Heart left ventricle (tissue), 16 donors: ENCODE measurements at regions of chr16 and their contacts with region 1.

Region 1: DNA sequence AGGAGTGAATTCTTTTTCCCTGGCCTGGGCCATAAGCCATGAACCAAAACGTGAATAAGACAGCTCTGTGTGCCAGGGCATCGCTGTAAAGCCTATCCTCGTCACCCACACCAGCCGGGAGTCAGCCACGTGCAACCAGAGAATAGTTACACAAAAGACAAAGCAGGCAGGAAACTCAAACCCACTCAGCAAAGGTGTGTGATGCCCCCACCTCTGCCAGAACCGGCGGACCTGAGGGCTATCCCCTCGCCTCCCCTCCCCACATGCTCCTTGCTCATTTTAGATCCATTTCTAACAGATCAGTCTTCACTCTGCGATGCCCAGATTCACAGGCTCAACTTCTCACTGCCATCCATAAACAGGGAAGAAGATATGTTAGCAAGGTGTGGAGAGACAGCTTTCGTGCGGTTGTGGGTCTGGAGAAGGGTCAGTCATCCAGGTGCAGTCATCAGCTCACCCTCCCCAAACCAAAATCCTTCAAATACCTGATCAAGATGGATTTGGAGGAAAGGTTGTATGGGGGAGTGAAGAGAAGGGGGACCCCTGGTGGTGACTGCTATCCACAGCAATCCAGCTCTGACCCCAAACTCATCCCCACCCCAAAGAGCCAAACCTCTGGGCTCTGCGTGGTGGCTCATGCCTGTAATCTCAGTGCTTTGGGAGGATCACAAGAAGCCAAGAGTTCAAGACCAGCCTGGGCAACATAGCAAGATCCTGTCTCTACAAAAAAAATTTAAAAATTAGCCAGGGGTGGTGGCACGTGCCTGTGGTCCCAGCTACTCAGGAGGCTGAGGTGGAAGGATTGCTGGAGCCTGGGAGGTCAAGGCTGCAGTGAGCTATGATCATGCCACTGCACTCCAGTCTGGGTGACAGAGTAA is 219.2 kb downstream of the C16orf78 start:
- DNase-seq: peak in 1 of 5 donors; percentile 28
- ATAC-seq: peak in 3 of 4 donors; percentile 49 to 58 (median 56)
- H3K4me3 ChIP-seq: no peak overlapping the region
- H3K27ac ChIP-seq: no peak overlapping the region
- H3K4me1 ChIP-seq: peaks cover 0 to 28% (median 11%) of the 10 kb centered on the region in 12 donors
- H3K27me3 ChIP-seq: peaks cover 0 to 2% (median 0%) of the 10 kb centered on the region in 9 donors
- CTCF ChIP-seq: peak; percentile 63 to 84 (median 75)
- POLR2A ChIP-seq: no peak

Region 2: DNA sequence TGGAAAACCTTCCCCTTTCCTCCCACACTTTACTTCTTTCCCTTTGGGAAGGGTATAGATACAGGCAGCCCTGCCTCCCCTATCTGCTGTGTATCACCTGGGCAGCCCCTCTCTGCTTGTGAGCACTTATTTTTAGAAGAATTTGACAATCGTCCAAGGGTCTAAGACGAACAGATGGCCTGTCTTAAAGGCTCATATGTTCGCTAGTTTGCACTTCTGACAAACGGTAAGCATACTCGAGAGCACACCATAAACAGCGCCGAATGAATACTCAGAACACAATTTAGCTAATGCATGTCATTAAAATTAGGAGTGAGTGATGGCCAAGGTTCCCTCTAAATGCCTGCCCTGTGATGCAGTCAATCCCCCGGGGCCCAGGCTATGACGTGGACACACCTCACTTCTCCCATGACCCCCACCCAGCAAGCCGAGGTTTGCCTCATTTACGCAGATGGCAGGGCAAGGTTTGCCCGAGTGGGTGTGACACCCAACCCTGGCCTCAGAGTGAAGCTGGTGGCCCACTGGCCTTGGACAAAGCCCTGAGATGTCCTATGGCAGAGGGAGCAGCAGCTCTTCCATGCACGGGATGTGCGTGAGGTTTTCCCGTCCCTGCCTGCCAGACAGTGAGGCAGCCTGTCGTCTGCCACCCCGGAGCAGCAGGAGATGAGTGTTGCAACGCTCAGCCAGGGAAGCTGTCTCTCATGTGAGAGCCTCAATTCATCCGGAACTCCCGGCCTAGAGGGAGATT is 93.9 kb before region 1 on chr16:
- intact Hi-C with region 1: loop called in 7 of 10 experiments (anchors 5 to 10 kb)
- DNase-seq: no peak
- ATAC-seq: no peak
- H3K4me3 ChIP-seq: no peak overlapping the region
- H3K27ac ChIP-seq: no peak overlapping the region
- H3K4me1 ChIP-seq: no peaks in the 10 kb centered on the region
- H3K27me3 ChIP-seq: no peaks in the 10 kb centered on the region
- CTCF ChIP-seq: no peak
- POLR2A ChIP-seq: no peak

Region 3: DNA sequence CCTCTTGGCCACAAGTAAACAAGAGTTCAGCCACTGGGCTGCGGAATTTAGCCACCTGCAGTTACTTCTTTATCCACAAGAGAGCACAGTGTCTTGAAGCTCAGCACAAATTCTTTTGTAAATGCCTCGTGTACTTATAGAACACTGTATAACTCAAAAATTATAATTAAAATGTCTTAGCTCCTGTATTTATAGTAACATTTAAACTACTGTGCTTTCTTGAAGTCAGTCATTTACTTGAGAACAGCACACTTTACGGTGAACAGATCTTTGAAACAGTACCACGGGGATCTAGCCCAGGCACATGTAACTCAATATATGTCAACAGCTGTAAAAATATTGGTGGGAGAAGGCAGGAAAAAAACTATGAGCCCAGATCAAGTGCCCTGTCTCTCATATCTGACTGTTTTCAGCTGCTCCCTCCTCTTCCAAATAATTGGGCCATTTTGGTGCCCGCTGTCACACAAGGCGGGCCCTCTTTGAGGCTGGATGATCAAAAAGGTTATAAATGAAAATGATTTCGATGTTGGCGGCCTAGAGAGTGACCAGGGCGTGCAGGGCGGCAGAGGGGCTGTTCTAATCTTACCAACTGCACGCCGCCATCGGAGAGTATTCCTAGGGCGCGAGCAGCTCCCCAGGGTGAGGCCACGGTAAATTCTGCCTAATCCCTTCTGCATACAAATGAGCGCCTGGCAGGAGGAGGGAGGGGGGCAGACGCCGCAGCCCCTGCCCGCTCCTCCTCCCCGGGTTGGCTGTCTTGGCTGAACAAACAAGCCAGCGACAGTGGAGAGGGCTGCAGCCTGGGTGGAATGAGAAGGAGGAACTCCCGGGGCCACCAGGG is 36.0 kb before region 1 on chr16:
- intact Hi-C with region 1: loop called in 2 of 10 experiments (anchors 5 kb)
- DNase-seq: no peak
- ATAC-seq: no peak
- H3K4me3 ChIP-seq: no peak overlapping the region
- H3K27ac ChIP-seq: no peak overlapping the region
- H3K4me1 ChIP-seq: peaks cover 0 to 27% (median 0%) of the 10 kb centered on the region in 12 donors
- H3K27me3 ChIP-seq: no peaks in the 10 kb centered on the region
- CTCF ChIP-seq: peak; percentile 25 to 57 (median 44)
- POLR2A ChIP-seq: no peak

Region 4: DNA sequence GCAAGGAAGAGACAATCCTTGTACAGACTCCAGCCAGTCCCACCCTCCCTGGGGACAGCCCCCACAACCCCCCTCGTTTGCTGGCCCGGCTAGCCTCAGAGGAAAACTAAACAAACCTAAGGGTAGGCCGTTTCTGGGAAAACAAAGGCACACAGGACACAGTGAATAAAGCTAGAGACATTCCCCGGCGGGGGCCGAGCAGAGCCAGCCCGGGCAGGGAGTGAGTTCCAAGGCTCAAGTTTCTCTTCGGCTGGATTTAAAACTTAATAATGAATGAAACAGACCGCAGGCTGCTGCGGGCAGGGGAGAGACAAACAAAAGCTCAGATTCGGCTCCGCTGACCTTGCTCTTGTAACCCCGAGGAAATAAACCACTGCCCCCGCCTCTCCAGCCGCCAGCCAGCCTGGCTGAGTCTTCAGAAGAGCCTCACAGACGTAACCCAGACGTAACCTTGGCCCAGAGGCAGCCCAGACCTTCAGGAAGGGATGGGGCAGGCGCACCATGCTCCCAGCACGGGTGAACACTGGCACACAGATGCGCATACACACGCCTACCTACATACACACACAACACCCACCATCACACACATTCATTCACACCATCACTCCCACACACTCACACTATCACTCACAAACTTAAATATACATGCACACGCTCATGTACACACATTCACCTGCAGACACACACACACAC is 47.1 kb after region 1 on chr16:
- intact Hi-C with region 1: no loop called
- DNase-seq: peak; percentile 63 to 85 (median 73)
- ATAC-seq: peak; percentile 43 to 82 (median 65)
- H3K4me3 ChIP-seq: peak overlapping the region in 1 of 12 donors; percentile 26
- H3K27ac ChIP-seq: peak overlapping the region in 11 of 12 donors; percentile 10 to 69 (median 63)
- H3K4me1 ChIP-seq: peaks cover 2 to 48% (median 32%) of the 10 kb centered on the region in 12 donors
- H3K27me3 ChIP-seq: no peaks in the 10 kb centered on the region
- CTCF ChIP-seq: no peak
- POLR2A ChIP-seq: no peak

Region 5: DNA sequence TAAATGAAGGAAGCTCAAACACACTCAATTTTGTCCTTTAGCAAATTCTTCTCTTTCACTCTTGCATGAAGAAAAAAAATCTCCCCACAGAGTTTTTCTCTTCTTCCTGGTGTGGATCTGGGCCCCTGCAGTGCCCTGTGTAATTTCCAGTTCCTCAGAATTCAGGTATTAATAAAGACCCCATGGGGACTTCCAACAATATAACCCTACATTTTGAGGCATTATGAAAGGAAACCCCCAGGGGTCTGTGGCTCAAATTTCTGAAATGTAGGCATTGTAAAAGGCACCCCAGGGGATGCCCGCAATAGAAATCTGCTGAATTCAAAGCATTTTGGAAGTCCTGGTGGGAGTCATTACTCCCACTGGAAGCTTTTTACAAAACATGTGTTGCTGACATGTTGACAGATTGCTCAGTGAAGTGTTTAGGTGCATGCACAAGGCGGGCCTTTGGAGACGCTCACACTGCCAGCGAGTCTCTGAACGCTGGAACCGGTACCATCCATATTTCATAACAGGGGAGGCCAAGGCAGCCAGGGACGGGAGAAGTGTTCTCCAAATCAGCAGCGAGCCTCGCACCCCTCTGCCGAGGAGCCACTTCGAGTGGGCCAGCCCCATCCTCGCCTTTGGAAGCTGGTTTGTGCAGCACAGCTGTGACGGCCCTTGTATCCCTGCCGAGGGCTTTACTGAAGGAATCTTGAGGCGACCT is 109.2 kb after region 1 on chr16:
- intact Hi-C with region 1: loop called in 1 of 10 experiments (anchors 5 kb)
- DNase-seq: peak; percentile 39 to 87 (median 79)
- ATAC-seq: peak; percentile 50 to 79 (median 68)
- H3K4me3 ChIP-seq: peak overlapping the region in 1 of 12 donors; percentile 22
- H3K27ac ChIP-seq: peak overlapping the region in 6 of 12 donors; percentile 3 to 57 (median 18)
- H3K4me1 ChIP-seq: peaks cover 0 to 55% (median 33%) of the 10 kb centered on the region in 12 donors
- H3K27me3 ChIP-seq: peaks cover 0 to 3% (median 0%) of the 10 kb centered on the region in 9 donors
- CTCF ChIP-seq: no peak
- POLR2A ChIP-seq: no peak

Region 6: DNA sequence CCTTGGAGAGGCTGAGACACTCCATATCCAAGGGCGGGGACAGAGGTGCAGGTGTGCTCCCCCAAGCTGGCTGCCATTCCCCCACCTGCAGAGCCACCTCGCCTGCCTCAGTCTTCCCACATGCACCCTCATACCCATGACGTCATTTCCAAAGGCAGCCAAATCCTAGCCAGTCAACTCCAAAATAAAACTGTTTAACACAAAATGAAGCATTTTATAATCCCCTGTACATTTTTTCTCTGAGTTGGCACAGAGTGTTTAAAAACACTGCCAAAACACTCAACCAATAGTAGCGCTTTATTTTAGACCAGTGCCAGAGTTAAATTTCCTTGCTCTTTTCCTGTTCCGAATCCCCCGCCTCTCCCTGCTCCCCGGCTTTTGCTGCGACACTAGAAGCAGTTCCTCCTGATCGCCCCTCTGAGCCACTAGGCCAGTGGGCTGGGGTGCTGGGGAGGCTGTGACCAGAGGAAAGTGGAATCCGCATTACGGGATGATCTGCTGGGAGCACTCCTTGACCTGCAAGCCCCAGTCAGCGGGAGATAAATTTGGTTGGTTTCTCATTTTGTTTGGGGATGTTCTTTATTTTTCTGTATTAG is 123.7 kb after region 1 on chr16:
- intact Hi-C with region 1: no loop called
- DNase-seq: no peak
- ATAC-seq: no peak
- H3K4me3 ChIP-seq: no peak overlapping the region
- H3K27ac ChIP-seq: no peak overlapping the region
- H3K4me1 ChIP-seq: peaks cover 0 to 4% (median 0%) of the 10 kb centered on the region in 12 donors
- H3K27me3 ChIP-seq: no peaks in the 10 kb centered on the region
- CTCF ChIP-seq: no peak
- POLR2A ChIP-seq: no peak